ENCODE measurements at regions of chr12 and their contacts with region 1.

Region 1: DNA sequence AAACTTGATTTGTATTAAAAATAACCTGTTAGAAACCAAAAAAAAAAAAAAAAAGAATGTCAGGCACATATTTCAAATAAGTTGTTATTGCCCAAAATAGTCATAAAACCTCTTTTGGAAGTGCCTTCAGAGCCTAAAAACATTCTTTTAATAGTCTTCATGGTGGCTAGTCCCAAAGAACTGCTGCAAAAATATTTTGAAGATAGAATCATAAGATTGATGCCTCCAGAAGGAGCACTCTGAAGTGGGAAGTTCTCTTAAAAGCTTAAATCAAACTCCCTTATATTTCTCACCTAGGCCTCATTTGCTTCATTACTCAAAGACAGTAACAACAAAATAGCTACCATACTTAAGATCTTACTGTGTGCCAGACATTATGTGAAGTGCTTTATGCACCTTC is 27.2 kb upstream of the NT5DC3 start:
- DNase-seq: no peak
- H3K4me3 ChIP-seq: no peak overlapping the region
- H3K27ac ChIP-seq: no peak overlapping the region
- H3K4me1 ChIP-seq: peaks cover 25% of the 10 kb centered on the region
- H3K27me3 ChIP-seq: no peaks in the 10 kb centered on the region
- CTCF ChIP-seq: no peak

Region 2: DNA sequence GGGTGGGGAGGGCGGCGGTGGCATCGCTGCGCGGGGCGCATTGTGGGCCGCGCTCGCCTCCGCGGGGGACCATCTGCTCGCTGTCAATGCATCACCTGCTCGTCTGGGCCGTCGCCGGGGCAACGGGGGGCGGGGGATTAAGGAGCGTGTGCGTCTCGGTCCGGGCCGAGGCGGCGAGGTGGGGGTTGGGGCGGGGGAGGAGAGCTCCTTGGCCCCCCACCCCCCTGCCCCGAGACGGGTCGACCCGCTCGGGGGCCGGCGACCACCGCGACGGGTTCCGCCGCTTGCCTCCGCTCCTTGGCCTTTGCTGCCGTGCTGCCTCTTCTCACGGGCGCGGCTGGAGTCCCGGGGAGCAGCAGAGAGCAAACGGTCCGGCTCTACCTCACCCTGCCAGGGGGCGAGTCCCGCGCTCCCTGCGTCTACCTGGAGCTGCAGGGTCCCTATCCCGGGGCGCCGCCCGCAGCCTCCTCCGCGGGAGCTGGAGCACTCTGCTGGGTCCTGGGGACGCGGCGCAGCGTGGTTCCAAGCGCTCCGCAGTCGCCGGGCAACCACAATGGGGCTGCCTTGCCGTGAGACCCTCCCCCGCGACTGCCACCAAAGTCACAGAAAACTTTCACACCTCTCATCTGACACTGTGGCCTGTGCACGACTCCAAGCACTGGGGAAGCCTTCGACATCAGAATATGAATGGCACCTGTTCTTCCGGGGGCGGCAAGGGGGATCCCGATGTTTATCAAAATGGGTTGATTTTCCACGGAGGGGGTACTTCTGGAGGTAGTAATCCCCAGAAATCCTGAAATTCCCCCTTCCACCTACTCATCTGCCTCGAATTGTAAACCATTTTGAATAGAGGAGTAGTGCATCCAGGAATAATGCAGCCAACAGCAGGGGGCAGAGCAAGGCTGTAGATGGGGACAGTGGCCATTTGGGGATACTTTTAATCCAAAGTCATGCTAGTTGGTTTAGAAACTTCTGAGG is 372.4 kb before region 1 on chr12 and contains the start of gene C12orf42:
- CTCF ChIA-PET with region 1: no interaction called
- dilution Hi-C with region 1: no loop called
- in situ Hi-C with region 1: no loop called
- intact Hi-C with region 1: loop called (anchors 1 kb)
- DNase-seq: peak; percentile 67
- H3K4me3 ChIP-seq: peak within 1 kb of the TSS; percentile 51 to 64 (median 53)
- H3K27ac ChIP-seq: peak within 1 kb of the TSS; percentile 55
- H3K4me1 ChIP-seq: peaks cover 39% of the 10 kb centered on the region
- H3K27me3 ChIP-seq: no peaks in the 10 kb centered on the region
- CTCF ChIP-seq: peak; percentile 88 to 90
- total RNA-seq, gene C12orf42: not detected

Region 3: DNA sequence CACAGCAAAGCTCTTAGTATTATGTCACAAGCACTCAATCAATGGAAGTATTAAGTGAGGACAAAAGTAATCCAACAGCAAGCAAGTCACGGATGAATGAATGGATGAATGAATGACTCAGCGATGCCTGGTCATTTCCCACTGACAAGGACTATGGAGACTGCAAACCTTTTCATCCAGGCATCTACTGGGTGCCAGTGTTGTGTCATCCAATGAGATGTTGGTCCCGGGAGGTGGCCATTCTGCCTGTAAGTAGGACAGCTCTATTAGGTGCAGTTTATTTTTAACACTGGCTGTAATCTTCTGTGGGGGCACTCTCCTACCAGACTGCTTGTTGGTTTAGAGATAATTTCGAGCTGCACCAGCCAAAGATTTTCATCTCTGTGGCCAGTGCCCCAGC is 241.7 kb before region 1 on chr12:
- CTCF ChIA-PET with region 1: no interaction called
- dilution Hi-C with region 1: no loop called
- in situ Hi-C with region 1: no loop called
- intact Hi-C with region 1: loop called (anchors 1 kb)
- DNase-seq: peak; percentile 66
- H3K4me3 ChIP-seq: no peak overlapping the region
- H3K27ac ChIP-seq: no peak overlapping the region
- H3K4me1 ChIP-seq: no peaks in the 10 kb centered on the region
- H3K27me3 ChIP-seq: no peaks in the 10 kb centered on the region
- CTCF ChIP-seq: peak; percentile 24 to 42

Region 4: DNA sequence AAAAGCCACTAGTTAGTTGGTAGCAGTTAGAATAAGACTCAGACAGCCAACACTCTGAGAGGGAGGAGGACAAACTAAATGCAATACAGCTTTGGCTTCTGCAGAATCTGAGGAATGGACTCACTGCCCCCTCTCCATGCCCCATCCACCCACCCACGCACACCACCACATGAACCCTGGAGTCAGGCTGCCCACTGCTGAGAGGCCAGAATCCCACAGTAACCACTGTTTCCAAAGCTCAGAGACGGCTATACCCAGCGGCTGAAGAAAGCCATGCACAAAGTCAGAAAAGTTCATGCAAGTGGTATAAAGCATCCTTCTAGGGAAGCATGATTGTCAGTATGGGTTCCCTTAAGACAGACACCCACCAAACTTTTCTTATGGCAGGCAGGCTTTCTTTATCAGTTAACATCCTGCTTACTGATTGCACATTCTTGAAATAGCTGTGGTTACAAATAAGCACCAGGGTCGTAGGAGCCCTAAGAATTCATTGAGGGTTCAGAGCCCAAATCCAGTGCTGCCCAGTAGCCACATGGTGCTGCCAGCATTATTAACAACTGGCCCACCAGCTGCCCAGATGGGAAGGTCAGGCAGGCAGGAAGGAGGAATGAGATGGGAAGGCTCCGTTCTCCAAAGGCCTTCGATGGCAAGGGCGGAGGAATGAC is 88.7 kb before region 1 on chr12:
- CTCF ChIA-PET with region 1: no interaction called
- dilution Hi-C with region 1: loop called (anchors 5 kb)
- in situ Hi-C with region 1: no loop called
- intact Hi-C with region 1: loop called (anchors 1 kb)
- DNase-seq: no peak
- H3K4me3 ChIP-seq: no peak overlapping the region
- H3K27ac ChIP-seq: no peak overlapping the region
- H3K4me1 ChIP-seq: no peaks in the 10 kb centered on the region
- H3K27me3 ChIP-seq: no peaks in the 10 kb centered on the region
- CTCF ChIP-seq: no peak

Region 5: DNA sequence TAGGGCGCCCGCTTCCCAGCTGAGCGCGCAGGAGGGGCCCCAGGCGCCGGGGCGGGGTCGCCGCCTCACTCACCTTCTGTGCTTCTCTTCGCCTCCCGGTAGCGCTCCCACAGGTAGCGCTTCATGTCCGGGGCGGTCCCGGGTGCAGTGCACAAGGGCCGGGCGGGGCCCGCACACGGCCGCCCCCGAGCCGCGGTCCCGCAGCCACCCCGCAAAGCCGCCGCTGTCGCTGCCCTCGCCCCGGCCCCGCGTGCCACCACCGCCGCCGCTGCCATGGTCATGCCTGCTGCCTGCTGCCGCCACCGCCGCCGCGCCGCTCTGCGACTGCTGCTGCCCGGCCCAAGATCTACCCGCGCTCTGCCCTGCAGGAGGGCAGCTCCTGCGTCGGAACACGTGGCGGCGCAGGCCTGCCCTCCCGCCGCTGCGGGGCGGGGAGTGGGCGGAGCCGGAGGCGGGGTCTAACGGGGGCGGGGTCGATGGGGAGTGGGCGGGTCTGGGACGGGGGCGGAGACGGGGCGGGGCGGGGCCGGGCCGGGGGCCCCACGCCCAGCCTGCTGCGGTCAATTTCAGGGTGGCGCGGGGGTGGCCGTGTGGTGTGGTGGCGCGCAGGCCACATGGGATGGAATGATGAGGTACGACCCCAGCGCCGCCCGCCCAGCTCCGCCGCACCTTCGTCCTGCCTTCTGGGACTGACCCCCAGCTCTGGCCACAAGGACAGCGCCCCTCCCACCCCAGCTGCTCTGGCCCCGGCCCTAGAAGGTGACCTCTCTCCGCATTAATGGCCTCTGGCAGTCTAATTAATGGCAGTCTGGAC is 27.1 kb before region 1 on chr12 and contains the start of gene NT5DC3:
- CTCF ChIA-PET with region 1: no interaction called
- dilution Hi-C with region 1: no loop called
- in situ Hi-C with region 1: no loop called
- intact Hi-C with region 1: loop called (anchors 1 kb)
- DNase-seq: peak; percentile 85
- H3K4me3 ChIP-seq: peak within 1 kb of the TSS; percentile 71 to 87 (median 84)
- H3K27ac ChIP-seq: peak within 1 kb of the TSS; percentile 95
- H3K4me1 ChIP-seq: peaks cover 16% of the 10 kb centered on the region
- H3K27me3 ChIP-seq: no peaks in the 10 kb centered on the region
- CTCF ChIP-seq: no peak
- total RNA-seq, gene NT5DC3: 46.4 to 98.5 TPM